ENCODE measurements at regions of chrX and their contacts with region 1.

Region 1: GRCh38 chrX:104113222-104113965 is 1.1 kb downstream of the ZCCHC18 start:
- DNase-seq: peak; percentile 75
- ATAC-seq: peak; percentile 62
- H3K4me3 Mint-ChIP-seq: peak overlapping the region; percentile 81
- H3K27ac Mint-ChIP-seq: peak overlapping the region; percentile 87
- H3K4me1 Mint-ChIP-seq: peaks cover 51% of the 10 kb centered on the region
- H3K27me3 Mint-ChIP-seq: no peaks in the 10 kb centered on the region

Region 2: DNA sequence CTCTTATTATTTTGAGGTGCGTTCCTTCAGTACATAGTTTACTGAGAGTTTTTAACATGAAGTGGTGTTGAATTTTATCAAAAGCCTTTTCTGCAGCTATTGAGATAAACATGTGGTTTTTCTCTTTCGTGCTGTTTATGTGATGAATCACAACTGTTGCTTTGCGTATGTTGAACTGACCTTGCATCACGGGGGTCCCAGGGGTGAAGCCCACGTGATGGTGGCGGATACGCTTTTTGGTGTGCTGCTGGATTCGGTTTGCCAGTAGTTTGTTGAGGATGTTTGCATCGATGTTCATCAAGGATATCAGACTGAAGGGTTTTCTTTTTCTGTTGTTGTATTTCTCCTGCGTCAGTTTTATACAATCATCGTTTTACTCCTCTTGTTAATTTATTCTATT is 95.3 kb before region 1 on chrX:
- CTCF ChIA-PET with region 1: no interaction called
- POLR2A ChIA-PET with region 1: no interaction called
- DNase-seq: no peak
- ATAC-seq: no peak
- H3K4me3 Mint-ChIP-seq: no peak overlapping the region
- H3K27ac Mint-ChIP-seq: no peak overlapping the region
- H3K4me1 Mint-ChIP-seq: no peaks in the 10 kb centered on the region
- H3K27me3 Mint-ChIP-seq: no peaks in the 10 kb centered on the region

Region 3: GRCh38 chrX:104098151-104098808 is 15.1 kb before region 1 on chrX:
- CTCF ChIA-PET with region 1: interaction called, 61 read pairs
- POLR2A ChIA-PET with region 1: no interaction called
- DNase-seq: peak; percentile 63
- ATAC-seq: no peak
- H3K4me3 Mint-ChIP-seq: no peak overlapping the region
- H3K27ac Mint-ChIP-seq: no peak overlapping the region
- H3K4me1 Mint-ChIP-seq: peaks cover 2% of the 10 kb centered on the region
- H3K27me3 Mint-ChIP-seq: no peaks in the 10 kb centered on the region

Measured in activated CD8-positive, alpha-beta T cell treated with anti-CD3 and anti-CD28 coated beads, Interleukin-2, amount 10 ng/mL, durations not matched to agents 7 days and 5 days (primary cell).